HEK293 (cell line): ENCODE measurements at regions of chr20 and their contacts with region 1.

Region 1: GRCh38 chr20:50790651-50791277 is 4.1 kb upstream of the BCAS4 start:
- H3K4me3 ChIP-seq: no peak overlapping the region
- H3K27ac ChIP-seq: peak overlapping the region; percentile 58
- H3K4me1 ChIP-seq: peaks cover 2% of the 10 kb centered on the region; the same call in 1 of the 2 replicates
- CTCF ChIP-seq: peak; percentile 98

Region 2: GRCh38 chr20:50450881-50451752 is 339.6 kb before region 1 on chr20:
- CTCF ChIA-PET with region 1: no interaction called
- POLR2A ChIA-PET with region 1: no interaction called
- H3K4me3 ChIP-seq: no peak overlapping the region
- H3K27ac ChIP-seq: no peak overlapping the region
- H3K4me1 ChIP-seq: no peaks in the 10 kb centered on the region
- CTCF ChIP-seq: no peak

Region 3: GRCh38 chr20:50625986-50626677 is 164.6 kb before region 1 on chr20:
- CTCF ChIA-PET with region 1: interaction called, 30 read pairs
- POLR2A ChIA-PET with region 1: interaction called, 6 read pairs
- H3K4me3 ChIP-seq: no peak overlapping the region
- H3K27ac ChIP-seq: no peak overlapping the region
- H3K4me1 ChIP-seq: no peaks in the 10 kb centered on the region
- CTCF ChIP-seq: peak; percentile 77

Region 4: DNA sequence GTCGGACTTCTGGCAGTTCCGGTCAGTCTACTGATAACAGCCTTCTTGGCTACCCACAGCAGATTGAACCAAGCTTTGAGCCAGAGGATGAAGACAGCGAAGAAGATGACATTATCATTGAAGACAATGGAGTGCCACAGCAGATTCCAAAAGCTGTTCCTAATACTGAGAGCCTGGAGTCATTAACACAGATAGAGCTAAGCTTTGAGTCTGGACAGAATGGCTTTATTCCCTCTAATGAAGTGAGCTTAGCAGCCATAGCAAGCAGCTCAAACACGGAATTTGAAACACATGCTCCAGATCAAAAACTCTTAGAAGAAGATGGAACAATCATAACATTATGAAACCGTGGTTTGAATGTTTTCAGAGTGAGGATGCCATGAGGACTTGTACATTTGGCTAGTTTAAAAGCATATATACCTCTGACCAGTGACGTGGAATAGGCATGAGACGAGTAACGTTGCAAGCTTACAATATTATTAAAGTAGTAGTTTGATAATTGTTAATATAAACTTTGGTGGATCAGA is 40.6 kb before region 1 on chr20:
- CTCF ChIA-PET with region 1: interaction called, 29 read pairs
- POLR2A ChIA-PET with region 1: interaction called, 3 read pairs
- H3K4me3 ChIP-seq: no peak overlapping the region
- H3K27ac ChIP-seq: no peak overlapping the region
- H3K4me1 ChIP-seq: peaks cover 16% of the 10 kb centered on the region
- CTCF ChIP-seq: no peak

Region 5: GRCh38 chr20:50815162-50815989 is 24.6 kb after region 1 on chr20:
- CTCF ChIA-PET with region 1: interaction called, 10 read pairs
- POLR2A ChIA-PET with region 1: no interaction called
- H3K4me3 ChIP-seq: no peak overlapping the region
- H3K27ac ChIP-seq: no peak overlapping the region
- H3K4me1 ChIP-seq: peaks cover 3% of the 10 kb centered on the region; the same call in 1 of the 2 replicates
- CTCF ChIP-seq: no peak

Region 6: DNA sequence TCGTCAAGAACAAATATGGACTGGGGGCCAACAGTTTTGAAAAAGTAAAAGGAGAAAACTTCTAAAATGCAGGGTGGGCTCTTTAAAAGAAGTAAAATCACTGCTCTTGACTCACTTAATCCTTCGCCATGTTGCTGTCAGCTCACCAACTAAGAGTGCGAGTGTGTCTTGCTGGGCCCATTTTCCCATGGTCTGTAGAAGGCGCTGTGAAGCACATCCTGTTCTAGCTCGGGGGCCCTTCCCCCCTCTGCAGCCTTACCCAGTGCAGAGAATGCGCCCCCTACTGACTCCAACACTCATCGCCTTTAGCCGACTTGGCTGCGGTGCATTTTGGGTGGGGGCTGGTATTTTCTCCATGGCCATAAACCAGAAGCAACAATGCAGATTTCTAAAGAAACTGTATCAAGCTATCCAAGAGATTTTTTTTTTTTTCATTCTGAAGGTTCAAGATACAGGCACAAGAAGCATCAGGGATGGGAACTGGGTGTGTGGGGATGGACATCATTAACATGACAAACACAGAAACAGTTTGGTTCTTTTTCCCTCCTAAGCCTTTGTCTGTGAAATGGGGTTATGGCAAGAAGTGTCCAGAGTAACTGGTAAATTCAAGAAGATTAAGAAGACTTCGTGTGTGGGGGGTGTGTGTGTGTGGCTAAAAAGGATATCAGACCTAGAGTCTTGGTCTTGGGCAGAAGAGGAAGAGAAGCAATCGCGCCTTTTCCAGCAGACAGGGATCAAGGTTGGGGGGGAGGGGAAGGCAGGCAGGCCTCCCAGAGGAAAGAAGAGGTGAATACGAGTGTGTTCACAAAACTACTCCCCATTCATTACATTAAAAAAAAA is 138.8 kb after region 1 on chr20:
- CTCF ChIA-PET with region 1: interaction called, 36 read pairs
- POLR2A ChIA-PET with region 1: interaction called, 17 read pairs
- H3K4me3 ChIP-seq: peak overlapping the region; percentile 98
- H3K27ac ChIP-seq: peak overlapping the region; percentile 58
- H3K4me1 ChIP-seq: no peaks in the 10 kb centered on the region; the same call in 1 of the 2 replicates
- CTCF ChIP-seq: peak; percentile 96

Region 7: DNA sequence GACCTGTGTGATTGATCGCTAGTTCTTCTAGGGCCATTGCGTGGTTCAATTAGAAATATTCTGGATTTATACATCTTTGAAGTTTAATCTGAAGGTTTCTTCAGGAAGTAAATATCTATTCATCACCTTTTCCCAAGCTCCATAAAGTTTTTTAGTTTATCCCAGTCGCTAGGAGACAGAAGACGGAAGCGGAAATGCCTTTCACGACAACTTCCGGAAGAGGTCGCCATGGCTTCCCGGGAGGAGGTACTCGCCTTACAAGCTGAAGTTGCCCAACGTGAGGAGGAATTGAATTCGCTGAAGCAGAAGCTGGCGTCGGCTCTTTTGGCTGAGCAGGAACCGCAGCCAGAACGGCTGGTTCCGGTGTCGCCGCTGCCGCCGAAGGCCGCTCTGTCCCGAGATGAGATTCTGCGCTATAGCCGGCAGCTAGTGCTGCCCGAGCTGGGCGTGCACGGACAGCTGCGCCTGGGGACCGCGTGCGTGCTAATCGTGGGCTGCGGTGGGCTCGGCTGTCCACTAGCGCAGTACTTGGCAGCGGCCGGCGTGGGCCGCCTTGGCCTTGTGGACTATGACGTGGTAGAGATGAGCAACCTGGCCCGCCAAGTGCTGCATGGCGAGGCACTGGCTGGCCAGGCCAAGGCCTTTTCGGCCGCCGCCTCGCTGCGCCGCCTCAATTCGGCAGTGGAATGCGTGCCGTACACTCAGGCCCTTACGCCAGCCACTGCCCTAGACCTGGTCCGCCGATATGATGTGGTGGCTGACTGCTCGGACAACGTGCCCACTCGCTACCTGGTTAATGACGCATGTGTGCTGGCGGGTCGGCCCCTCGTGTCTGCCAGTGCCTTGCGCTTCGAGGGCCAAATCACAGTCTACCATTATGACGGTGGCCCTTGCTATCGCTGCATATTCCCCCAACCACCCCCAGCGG is 168.1 kb after region 1 on chr20 and contains the start of gene MOCS3:
- CTCF ChIA-PET with region 1: interaction called, 5 read pairs
- POLR2A ChIA-PET with region 1: interaction called, 11 read pairs
- H3K4me3 ChIP-seq: peak within 1 kb of the TSS; percentile 100
- H3K27ac ChIP-seq: peak within 1 kb of the TSS; percentile 87
- H3K4me1 ChIP-seq: peaks cover 2% of the 10 kb centered on the region; the same call in 1 of the 2 replicates
- CTCF ChIP-seq: no peak

Region 8: DNA sequence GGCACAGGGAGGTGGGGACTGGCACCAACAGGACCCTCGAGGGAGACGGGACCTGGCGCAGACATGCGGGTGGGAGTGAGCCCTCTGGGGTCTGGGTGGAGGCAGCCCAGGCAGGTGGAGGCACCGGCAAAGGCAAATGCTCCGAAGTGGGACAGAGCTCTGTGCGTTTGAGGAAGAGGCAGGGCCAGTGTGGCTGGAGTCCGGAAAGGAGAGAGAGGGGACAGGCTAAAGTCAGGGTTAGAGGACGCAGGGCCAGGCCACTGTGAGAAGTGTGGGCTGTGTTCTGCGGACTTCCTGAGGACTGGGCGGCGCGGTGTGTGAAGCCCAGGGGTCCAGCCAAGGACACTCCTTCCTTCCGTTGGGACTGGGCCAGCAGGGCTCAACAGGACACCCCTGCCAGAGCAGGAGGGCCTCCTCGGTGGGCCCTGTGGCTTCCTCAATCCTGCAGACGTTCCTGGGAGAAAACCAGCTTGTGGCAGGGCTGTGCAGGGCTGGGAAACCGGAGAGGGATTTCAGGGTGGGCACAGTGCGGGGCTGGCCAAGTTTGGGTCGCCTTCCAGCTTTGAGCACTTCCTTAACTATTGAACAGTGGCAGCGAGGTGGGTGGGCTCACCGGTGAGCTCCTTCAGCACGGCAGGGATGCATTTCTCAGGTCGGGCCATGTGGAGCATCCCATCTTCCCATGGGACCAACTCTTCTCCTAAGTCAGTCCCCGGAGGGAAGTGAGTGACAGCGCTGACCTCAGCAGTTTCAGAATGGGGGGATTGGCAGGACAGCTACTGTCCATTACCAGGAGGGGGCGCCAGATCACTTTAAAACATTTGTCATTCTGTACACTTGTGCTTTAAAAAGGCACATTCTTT is 190.3 kb after region 1 on chr20:
- CTCF ChIA-PET with region 1: interaction called, 14 read pairs
- POLR2A ChIA-PET with region 1: interaction called, 4 read pairs
- H3K4me3 ChIP-seq: no peak overlapping the region
- H3K27ac ChIP-seq: no peak overlapping the region
- H3K4me1 ChIP-seq: no peaks in the 10 kb centered on the region
- CTCF ChIP-seq: peak; percentile 27; the same call in 1 of the 2 replicates

Region 9: GRCh38 chr20:51220293-51220706 is 429.5 kb after region 1 on chr20:
- CTCF ChIA-PET with region 1: no interaction called
- POLR2A ChIA-PET with region 1: no interaction called
- H3K4me3 ChIP-seq: no peak overlapping the region
- H3K27ac ChIP-seq: no peak overlapping the region
- H3K4me1 ChIP-seq: no peaks in the 10 kb centered on the region
- CTCF ChIP-seq: peak; percentile 77